Heart left ventricle (tissue), 16 donors: ENCODE measurements at regions of chr15 and their contacts with region 1.

Region 1: DNA sequence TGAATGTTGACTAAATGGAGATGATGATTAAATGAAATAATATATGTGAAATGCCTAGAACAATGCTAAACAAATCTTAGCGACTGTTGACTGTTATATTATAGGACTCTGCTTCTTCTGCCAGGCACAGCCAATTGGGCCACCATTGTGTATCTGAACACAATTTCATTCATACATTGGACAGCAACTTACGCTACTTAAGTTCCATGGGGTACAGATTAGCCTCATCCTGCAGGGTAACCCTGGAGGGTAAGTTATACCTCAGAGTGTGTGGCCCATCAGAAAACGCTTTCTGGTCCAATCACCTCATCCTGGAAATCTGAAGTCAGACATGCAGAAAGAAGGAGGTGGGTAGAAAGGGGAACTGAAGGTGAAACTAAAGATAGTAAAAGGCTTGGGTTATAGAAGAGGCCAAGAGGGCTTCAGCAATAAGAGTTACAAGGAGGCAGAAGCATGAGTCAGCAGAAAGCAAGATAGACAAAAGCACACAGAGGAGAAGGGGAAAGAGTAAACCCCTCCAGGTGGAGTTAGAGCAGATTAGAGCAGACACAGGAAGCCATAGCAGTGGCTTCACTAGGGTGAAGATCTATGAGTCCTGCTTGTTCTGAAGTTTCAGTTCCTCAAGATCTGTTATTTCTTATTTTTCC is 119.3 kb upstream of the SLC24A5 start:
- DNase-seq: no peak
- ATAC-seq: no peak
- H3K4me3 ChIP-seq: no peak overlapping the region
- H3K27ac ChIP-seq: no peak overlapping the region
- H3K4me1 ChIP-seq: peaks cover 0 to 7% (median 0%) of the 10 kb centered on the region in 12 donors
- H3K27me3 ChIP-seq: peaks cover 0 to 3% (median 0%) of the 10 kb centered on the region in 9 donors
- CTCF ChIP-seq: no peak
- POLR2A ChIP-seq: no peak

Region 2: GRCh38 chr15:47917881-47918280 is 83.6 kb before region 1 on chr15:
- intact Hi-C with region 1: no loop called
- DNase-seq: no peak
- ATAC-seq: no peak
- H3K4me3 ChIP-seq: no peak overlapping the region
- H3K27ac ChIP-seq: no peak overlapping the region
- H3K4me1 ChIP-seq: no peaks in the 10 kb centered on the region
- H3K27me3 ChIP-seq: no peaks in the 10 kb centered on the region
- CTCF ChIP-seq: no peak
- POLR2A ChIP-seq: no peak

Region 3: DNA sequence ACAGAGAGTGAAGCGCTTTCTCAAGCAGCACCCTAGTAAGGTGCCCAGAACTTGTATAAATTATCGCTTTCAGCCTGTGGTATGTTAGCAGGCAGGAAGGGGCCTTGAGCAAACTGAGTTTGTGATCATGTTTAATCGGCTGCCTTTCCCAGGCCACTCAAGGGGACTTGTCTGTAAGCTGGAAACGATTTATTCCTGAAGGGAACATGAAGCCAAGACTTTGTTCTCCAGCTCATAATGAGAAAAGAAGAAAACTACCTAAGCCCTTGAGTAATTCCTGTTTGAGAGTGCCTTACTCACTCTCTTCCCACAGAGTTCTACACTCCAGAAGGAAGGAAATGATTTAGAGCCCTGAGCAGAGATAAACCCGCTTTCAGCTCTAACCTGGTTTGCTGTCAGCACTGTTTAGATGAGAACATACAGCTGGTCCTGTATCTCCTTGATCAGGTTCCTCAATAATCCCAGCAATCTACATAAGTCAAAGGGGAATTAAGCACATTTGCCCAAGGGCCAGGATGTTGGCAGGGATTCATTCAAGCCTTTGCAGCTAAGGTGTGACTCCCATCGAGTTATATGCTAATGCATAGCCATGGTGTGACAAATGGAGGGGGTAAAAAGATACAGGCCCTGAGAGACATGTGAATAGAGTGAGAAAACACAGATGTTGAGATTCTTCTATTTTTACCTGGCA is 68.4 kb before region 1 on chr15:
- intact Hi-C with region 1: no loop called
- DNase-seq: no peak
- ATAC-seq: no peak
- H3K4me3 ChIP-seq: no peak overlapping the region
- H3K27ac ChIP-seq: no peak overlapping the region
- H3K4me1 ChIP-seq: no peaks in the 10 kb centered on the region
- H3K27me3 ChIP-seq: no peaks in the 10 kb centered on the region
- CTCF ChIP-seq: no peak
- POLR2A ChIP-seq: no peak

Region 4: GRCh38 chr15:48285329-48286214 is 284.1 kb after region 1 on chr15:
- intact Hi-C with region 1: loop called in 1 of 10 experiments (anchors 10 kb)
- DNase-seq: peak in 3 of 5 donors; percentile 28 to 41 (median 38)
- ATAC-seq: peak; percentile 45 to 80 (median 70)
- H3K4me3 ChIP-seq: peak overlapping the region in 8 of 12 donors; percentile 5 to 31 (median 28)
- H3K27ac ChIP-seq: no peak overlapping the region
- H3K4me1 ChIP-seq: peaks cover 0 to 22% (median 0%) of the 10 kb centered on the region in 12 donors
- H3K27me3 ChIP-seq: peaks cover 0 to 3% (median 0%) of the 10 kb centered on the region in 9 donors
- CTCF ChIP-seq: peak; percentile 59 to 84 (median 72)
- POLR2A ChIP-seq: no peak